Naive thymus-derived CD8-positive, alpha-beta T cell (primary cell): ENCODE measurements at regions of chr3 and their contacts with region 1.

Region 1: DNA sequence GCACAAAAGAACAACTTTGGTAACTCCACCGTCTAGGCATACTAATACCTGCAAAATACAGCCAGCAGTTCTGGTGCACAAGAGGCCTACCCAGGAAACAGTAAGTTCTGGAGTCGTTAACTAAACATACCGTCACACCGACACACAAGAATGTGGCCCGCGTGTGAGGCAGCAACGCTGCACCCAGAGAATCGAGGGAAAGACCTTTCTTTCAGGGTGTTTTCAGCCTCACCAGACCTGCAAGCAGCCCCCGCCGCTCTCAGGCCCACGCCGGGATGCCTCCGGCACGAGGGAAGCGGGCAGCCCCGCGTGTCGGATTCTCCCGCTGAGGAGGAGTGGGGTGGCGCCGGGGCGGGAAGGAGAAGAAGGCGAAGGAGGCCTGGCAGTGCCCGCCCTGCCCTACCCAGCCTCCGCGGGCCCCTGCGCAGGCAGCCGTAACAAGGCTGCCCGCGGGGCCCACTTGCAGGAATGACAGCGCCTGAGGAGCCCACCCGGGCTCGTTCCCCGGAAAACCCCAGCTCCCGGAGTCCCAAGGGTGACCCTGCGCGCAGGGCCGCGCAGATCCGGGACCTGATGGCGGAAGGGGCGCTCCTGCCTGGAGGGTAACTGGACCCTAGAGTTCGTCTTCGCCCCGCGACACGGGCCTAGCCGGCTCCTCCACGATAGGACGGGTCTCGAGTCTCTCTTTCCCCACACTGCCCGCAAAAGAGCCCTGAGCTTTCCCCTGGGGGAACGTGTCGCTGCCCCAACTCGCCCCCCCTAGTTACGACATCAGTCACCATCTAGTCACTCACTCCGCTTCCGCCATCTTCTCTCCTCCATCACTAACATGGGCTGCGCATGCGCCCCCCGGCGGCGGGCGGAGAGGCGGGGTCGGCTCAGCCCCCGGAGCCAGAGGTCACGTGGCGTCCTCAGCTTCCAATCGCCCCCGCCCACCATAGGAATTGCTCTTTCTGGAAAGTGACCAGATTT is at the start of gene PHC3:
- DNase-seq: peak; percentile 88 to 96 (median 92)
- ATAC-seq: peak; percentile 70 to 72
- H3K4me3 Mint-ChIP-seq: peak within 1 kb of the TSS; percentile 96 to 100 (median 98)
- H3K27ac Mint-ChIP-seq: peak within 1 kb of the TSS; percentile 99 to 100 (median 100)
- H3K4me1 Mint-ChIP-seq: peaks cover 14 to 39% (median 33%) of the 10 kb centered on the region in 4 donors
- H3K27me3 Mint-ChIP-seq: no peaks in the 10 kb centered on the region
- polyA plus RNA-seq, gene PHC3: 34.5 to 54.8 (median 38.8) TPM

Region 2: GRCh38 chr3:169764452-169765274 is 416.5 kb before region 1 on chr3 and contains the start of gene TERC:
- POLR2A ChIA-PET with region 1: interaction called, 11 read pairs
- DNase-seq: peak; percentile 83 to 98 (median 94)
- ATAC-seq: peak; percentile 87 to 90
- H3K4me3 Mint-ChIP-seq: peak within 1 kb of the TSS; percentile 87 to 98 (median 96)
- H3K27ac Mint-ChIP-seq: peak within 1 kb of the TSS; percentile 95 to 100 (median 98)
- H3K4me1 Mint-ChIP-seq: peaks cover 7 to 28% (median 27%) of the 10 kb centered on the region in 4 donors
- H3K27me3 Mint-ChIP-seq: no peaks in the 10 kb centered on the region
- polyA plus RNA-seq, gene TERC: 1.4 to 1.6 TPM in 2 of 3 donors, not detected in the other

Region 3: GRCh38 chr3:170154569-170155143 is 26.5 kb before region 1 on chr3:
- POLR2A ChIA-PET with region 1: interaction called, 31 read pairs
- DNase-seq: peak in 3 of 10 donors; percentile 13 to 38 (median 28)
- ATAC-seq: peak; percentile 78 to 83
- H3K4me3 Mint-ChIP-seq: peak overlapping the region; percentile 55 to 86 (median 78)
- H3K27ac Mint-ChIP-seq: peak overlapping the region; percentile 80 to 98 (median 94)
- H3K4me1 Mint-ChIP-seq: peaks cover 23 to 65% (median 56%) of the 10 kb centered on the region in 4 donors
- H3K27me3 Mint-ChIP-seq: no peaks in the 10 kb centered on the region

Region 4: DNA sequence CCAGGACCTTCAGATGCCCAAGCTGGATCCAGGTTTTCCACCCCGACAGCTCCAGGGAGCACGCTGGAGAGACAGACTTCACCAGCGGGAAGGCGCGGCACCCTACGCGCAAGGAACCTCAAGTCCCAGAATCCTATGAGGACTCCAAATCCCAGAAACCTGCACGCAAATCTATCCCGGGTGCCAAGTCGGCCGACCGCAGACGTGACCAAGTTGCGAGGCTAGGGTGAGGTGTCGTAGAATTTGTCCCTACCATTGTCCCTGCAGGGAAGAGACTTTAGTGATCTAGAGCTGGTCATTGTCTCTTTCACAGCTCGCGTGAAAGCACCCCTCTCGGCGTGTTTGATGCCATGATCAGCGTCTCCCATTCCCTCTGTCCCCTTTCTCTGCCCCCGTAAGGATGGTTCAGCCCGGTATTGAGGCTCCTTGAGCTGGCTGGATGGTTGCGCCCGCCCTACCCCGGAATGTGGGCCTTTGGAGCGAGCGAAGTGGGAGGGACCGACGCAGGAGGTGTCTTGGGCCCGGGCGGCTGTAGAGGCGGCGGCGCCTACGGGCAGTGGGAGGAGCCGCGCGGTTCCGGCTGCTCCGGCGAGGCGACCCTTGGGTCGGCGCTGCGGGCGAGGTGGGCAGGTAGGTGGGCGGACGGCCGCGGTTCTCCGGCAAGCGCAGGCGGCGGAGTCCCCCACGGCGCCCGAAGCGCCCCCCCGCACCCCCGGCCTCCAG is 40.9 kb after region 1 on chr3 and contains the start of gene PRKCI:
- POLR2A ChIA-PET with region 1: interaction called, 13 read pairs
- DNase-seq: peak; percentile 70 to 90 (median 78)
- ATAC-seq: peak; percentile 77 to 88
- H3K4me3 Mint-ChIP-seq: peak within 1 kb of the TSS; percentile 87 to 97 (median 94)
- H3K27ac Mint-ChIP-seq: peak within 1 kb of the TSS; percentile 91 to 99 (median 96)
- H3K4me1 Mint-ChIP-seq: peaks cover 12 to 37% (median 33%) of the 10 kb centered on the region in 4 donors
- H3K27me3 Mint-ChIP-seq: no peaks in the 10 kb centered on the region
- polyA plus RNA-seq, gene PRKCI: 10.8 to 15.0 (median 14.1) TPM